Activated CD4-positive, alpha-beta T cell treated with anti-CD3 and anti-CD28 coated beads for 36 hours (primary cell): ENCODE measurements at regions of chr1 and their contacts with region 1.

Region 1: DNA sequence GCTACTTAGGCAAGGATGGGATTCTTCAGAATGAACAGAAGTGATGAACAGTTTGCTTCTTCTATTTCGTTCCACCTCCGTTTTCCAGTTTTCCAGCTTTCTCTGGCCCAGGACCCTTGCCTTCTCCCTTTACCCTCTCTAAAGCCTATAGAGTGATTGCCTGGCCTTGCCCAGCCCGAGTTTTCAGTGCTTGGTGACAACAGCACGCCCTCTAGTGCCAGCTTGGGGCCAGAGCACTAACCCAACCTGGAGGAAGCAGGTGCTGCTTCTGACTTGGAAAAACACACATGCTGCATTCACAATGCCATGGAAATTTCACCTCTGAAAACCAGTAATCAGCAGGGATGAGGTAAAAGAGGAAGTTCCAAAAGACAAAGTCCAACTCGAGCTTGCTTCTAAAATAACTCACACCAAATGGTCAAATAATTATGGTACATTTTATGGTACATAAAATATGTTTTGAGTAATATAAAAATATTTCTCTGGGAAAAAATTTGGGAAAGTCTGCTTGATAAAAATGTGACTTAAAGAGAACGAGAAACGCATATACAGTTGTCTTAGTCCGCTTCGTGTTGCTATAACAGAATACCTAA is 26.1 kb downstream of the UBE2T start:
- DNase-seq: peak; percentile 87
- ATAC-seq: peak; percentile 87
- H3K4me3 Mint-ChIP-seq: no peak overlapping the region
- H3K27ac Mint-ChIP-seq: no peak overlapping the region
- H3K4me1 Mint-ChIP-seq: peaks cover 5% of the 10 kb centered on the region
- H3K27me3 Mint-ChIP-seq: peaks cover 3% of the 10 kb centered on the region

Region 2: GRCh38 chr1:202192770-202193613 is 122.7 kb before region 1 on chr1:
- CTCF ChIA-PET with region 1: interaction called, 40 read pairs
- POLR2A ChIA-PET with region 1: no interaction called
- intact Hi-C with region 1: loop called (anchors 1 to 2 kb)
- DNase-seq: peak; percentile 75
- ATAC-seq: peak; percentile 33
- H3K4me3 Mint-ChIP-seq: no peak overlapping the region
- H3K27ac Mint-ChIP-seq: no peak overlapping the region
- H3K4me1 Mint-ChIP-seq: peaks cover 2% of the 10 kb centered on the region
- H3K27me3 Mint-ChIP-seq: peaks cover 20% of the 10 kb centered on the region

Region 3: GRCh38 chr1:202268032-202268431 is 47.6 kb before region 1 on chr1:
- CTCF ChIA-PET with region 1: interaction called, 45 read pairs
- POLR2A ChIA-PET with region 1: no interaction called
- intact Hi-C with region 1: no loop called
- DNase-seq: no peak
- ATAC-seq: no peak
- H3K4me3 Mint-ChIP-seq: no peak overlapping the region
- H3K27ac Mint-ChIP-seq: no peak overlapping the region
- H3K4me1 Mint-ChIP-seq: no peaks in the 10 kb centered on the region
- H3K27me3 Mint-ChIP-seq: peaks cover 23% of the 10 kb centered on the region

Region 4: DNA sequence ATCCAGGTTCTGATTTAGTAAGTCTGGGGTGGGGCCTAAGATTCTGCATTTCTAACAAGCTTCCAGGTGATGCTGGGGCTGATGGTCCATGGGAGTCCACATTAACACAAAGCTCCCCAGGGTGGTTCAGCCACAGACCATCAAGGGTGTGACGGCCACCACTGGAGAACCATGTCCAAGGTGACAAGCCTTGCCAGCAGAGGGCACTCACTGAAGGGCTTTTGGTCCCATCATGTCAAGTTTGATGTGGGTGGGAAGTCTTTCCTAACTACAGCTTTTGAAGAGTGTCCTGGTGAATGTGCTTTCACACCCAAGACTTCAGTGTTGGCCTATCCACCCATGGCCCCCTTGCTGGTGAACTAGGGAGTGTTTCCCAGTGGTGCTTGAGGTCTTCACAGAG is 41.1 kb before region 1 on chr1:
- CTCF ChIA-PET with region 1: interaction called, 45 read pairs
- POLR2A ChIA-PET with region 1: no interaction called
- intact Hi-C with region 1: loop called (anchors 1 kb)
- DNase-seq: peak; percentile 74
- ATAC-seq: peak; percentile 61
- H3K4me3 Mint-ChIP-seq: no peak overlapping the region
- H3K27ac Mint-ChIP-seq: no peak overlapping the region
- H3K4me1 Mint-ChIP-seq: no peaks in the 10 kb centered on the region
- H3K27me3 Mint-ChIP-seq: peaks cover 2% of the 10 kb centered on the region